Activated CD4-positive, alpha-beta memory T cell treated with anti-CD3 and anti-CD28 coated beads for 36 hours (primary cell): ENCODE measurements at regions of chr17 and their contacts with region 1.

Region 1: GRCh38 chr17:50865984-50866774 is at the start of gene TOB1:
- DNase-seq: peak; percentile 98
- H3K4me3 Mint-ChIP-seq: peak within 1 kb of the TSS; percentile 100
- H3K27ac Mint-ChIP-seq: peak within 1 kb of the TSS; percentile 99
- H3K4me1 Mint-ChIP-seq: peaks cover 43% of the 10 kb centered on the region
- H3K27me3 Mint-ChIP-seq: no peaks in the 10 kb centered on the region
- total RNA-seq, gene TOB1: 42.3 to 44.1 TPM

Region 2: GRCh38 chr17:50887705-50888245 is 21.6 kb after region 1 on chr17:
- CTCF ChIA-PET with region 1: interaction called, 3 read pairs
- POLR2A ChIA-PET with region 1: interaction called, 12 read pairs
- intact Hi-C with region 1: loop called (anchors 2 kb)
- DNase-seq: no peak
- H3K4me3 Mint-ChIP-seq: no peak overlapping the region
- H3K27ac Mint-ChIP-seq: peak overlapping the region; percentile 30
- H3K4me1 Mint-ChIP-seq: peaks cover 23% of the 10 kb centered on the region
- H3K27me3 Mint-ChIP-seq: no peaks in the 10 kb centered on the region

Region 3: DNA sequence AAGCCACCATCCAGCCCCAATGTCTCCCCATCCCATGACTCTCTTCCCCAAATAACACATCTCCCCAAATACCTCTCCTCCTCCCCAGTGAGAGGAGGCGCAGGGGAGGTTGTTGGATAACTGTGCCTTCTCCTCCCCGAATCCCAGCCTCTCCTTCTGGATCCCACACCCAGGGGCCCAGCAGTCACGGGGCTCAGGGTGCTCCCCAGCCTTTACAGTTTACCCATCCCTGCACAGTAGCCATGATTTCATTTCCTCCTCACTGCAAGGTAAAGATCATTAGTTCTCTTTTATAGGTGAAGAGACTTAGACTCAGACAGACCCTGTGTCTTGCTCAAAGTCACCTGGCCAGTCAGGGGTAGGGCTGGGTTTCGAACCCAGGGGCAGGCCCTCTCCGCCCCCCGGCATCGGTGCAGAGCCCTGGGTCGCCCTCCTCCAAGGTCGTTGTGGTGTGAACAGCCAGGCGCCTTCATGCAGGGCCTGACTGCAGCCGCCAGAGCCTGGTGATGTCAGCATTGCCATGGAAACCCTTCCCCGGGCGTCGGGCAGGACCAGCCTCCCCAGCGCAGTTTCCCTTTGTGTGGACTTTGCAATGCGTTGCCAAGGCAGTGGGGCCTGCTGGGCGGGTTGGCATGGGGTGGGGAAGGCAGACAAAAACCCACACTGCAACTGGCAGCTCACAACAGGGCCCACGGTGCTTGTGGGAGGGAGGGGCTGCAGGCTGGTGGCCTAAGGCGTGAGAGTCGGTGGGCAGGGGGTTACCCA is 53.3 kb after region 1 on chr17:
- CTCF ChIA-PET with region 1: interaction called, 4 read pairs
- POLR2A ChIA-PET with region 1: interaction called, 35 read pairs
- intact Hi-C with region 1: no loop called
- DNase-seq: peak; percentile 91
- H3K4me3 Mint-ChIP-seq: peak overlapping the region; percentile 50
- H3K27ac Mint-ChIP-seq: peak overlapping the region; percentile 88
- H3K4me1 Mint-ChIP-seq: peaks cover 32% of the 10 kb centered on the region
- H3K27me3 Mint-ChIP-seq: no peaks in the 10 kb centered on the region

Region 4: DNA sequence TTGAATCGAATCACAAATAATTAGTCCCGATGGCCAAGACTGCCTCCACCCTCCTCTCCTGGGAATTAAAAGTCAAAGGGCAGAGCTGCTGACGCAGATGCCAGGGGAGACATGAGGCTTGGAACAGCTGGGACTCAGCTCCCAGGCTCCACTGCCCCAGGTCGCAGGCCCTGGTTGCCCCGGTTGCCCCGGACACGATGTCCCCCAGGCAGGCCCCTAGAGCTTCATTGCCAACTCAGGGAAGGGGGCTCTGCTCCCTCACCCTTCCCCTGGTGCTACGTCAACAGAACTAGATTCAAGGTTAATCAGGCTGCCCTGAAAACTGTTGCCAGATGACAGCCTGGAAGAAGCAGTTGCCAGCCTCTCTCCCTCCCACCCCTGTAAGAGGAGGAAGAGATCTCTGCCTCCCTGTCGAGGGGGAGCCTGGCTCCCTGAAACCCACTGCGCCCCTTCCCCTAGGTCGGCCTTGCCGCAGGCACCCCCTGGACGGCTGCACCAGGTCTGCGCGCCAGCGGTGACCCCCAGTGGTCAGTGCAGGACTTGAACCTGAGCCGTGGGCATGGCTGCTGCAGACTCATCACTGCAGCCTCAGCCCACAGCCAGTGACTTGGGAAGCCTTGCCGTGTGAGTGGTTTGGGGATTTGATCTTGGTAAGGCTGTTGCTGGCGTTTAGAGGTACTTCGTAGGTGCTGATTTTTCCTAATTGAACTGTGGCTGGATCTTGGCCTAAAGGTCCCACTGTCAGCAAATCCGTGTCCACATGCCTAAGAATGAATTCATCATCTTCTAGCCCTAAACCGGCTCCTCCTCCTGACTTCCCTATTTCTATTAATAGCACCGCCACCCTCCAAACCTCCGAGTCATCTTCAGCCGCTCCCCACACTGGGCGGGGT is 84.1 kb after region 1 on chr17:
- CTCF ChIA-PET with region 1: interaction called, 153 read pairs
- POLR2A ChIA-PET with region 1: interaction called, 44 read pairs
- intact Hi-C with region 1: no loop called
- DNase-seq: peak; percentile 72
- H3K4me3 Mint-ChIP-seq: no peak overlapping the region
- H3K27ac Mint-ChIP-seq: no peak overlapping the region
- H3K4me1 Mint-ChIP-seq: peaks cover 10% of the 10 kb centered on the region
- H3K27me3 Mint-ChIP-seq: no peaks in the 10 kb centered on the region

Region 5: GRCh38 chr17:51153210-51154072 is 287.3 kb after region 1 on chr17 and contains the start of gene NME1:
- CTCF ChIA-PET with region 1: interaction called, 7 read pairs
- POLR2A ChIA-PET with region 1: interaction called, 10 read pairs
- intact Hi-C with region 1: loop called (anchors 1 kb)
- DNase-seq: peak; percentile 99
- H3K4me3 Mint-ChIP-seq: no peak within 1 kb of the TSS
- H3K27ac Mint-ChIP-seq: no peak within 1 kb of the TSS
- H3K4me1 Mint-ChIP-seq: peaks cover 19% of the 10 kb centered on the region
- H3K27me3 Mint-ChIP-seq: no peaks in the 10 kb centered on the region
- total RNA-seq, gene NME1: 235 to 238 TPM